Sciatic nerve (tissue), 2 donors: ENCODE measurements at regions of chr22 and their contacts with region 1.

Region 1: GRCh38 chr22:21646608-21647590 is 4.8 kb downstream of the SDF2L1 start:
- DNase-seq: peak; percentile 87
- ATAC-seq: peak; percentile 39

Region 2: GRCh38 chr22:21613553-21614233 is 33.2 kb before region 1 on chr22:
- intact Hi-C with region 1: loop called (anchors 1 kb)
- DNase-seq: no peak
- ATAC-seq: no peak

Region 3: GRCh38 chr22:21712894-21713712 is 66.2 kb after region 1 on chr22:
- intact Hi-C with region 1: no loop called
- DNase-seq: peak; percentile 79
- ATAC-seq: peak; percentile 93